ENCODE measurements at regions of chr2 and their contacts with region 1.

Region 1: DNA sequence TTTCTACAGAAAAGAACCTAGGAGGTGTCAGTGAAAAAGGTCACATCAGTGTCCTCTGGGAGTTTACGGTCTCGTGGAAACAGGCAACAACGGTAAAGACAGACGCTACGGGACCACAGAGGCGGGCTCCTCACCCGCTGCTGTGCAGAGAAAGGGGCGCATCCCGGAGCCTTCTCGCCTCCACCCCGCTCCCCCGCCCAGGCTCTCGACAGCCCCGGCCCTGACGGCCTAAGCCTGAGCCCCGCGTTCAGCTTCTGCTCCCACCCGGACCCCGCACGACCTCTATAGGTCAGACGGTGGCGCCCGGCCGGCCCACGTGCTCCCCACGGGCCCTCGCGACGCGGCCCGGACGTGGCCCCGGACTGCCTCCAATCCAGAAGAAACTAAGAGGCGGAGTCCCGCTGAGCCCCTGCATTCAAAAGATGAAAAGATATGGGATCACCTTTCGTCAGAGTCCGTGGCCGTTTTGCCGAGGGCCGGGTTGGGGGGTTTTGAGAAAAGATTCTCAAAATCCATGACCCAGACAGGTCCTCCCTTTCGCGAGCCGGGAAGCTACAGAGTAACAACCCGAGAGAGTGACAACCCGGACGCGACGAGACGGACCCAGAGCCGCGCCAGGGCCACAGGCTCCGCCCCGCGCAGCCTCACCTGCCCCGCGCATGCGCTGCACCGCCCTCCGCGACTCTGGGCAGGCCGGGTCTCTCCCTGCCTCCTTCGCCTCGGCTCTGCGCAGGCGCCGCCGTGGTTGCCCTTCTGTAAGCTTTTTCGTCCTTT is at the start of gene ZC3H8:
- DNase-seq: peak; percentile 92 to 95 (median 92)
- H3K4me3 ChIP-seq: peak within 1 kb of the TSS; percentile 87
- H3K27ac ChIP-seq: peak within 1 kb of the TSS; percentile 18 to 54
- H3K4me1 ChIP-seq: peaks cover 1% of the 10 kb centered on the region
- H3K27me3 ChIP-seq: no peaks in the 10 kb centered on the region
- CTCF ChIP-seq: no peak
- EP300 ChIP-seq: no peak
- POLR2A ChIP-seq: peak; percentile 53
- total RNA-seq, gene ZC3H8: 4.9 to 36.2 (median 10.9) TPM

Region 2: GRCh38 chr2:111994042-111994441 is 260.6 kb before region 1 on chr2:
- intact Hi-C with region 1: no loop called
- DNase-seq: no peak
- H3K4me3 ChIP-seq: no peak overlapping the region
- H3K27ac ChIP-seq: no peak overlapping the region
- H3K4me1 ChIP-seq: no peaks in the 10 kb centered on the region
- H3K27me3 ChIP-seq: peaks cover 3% of the 10 kb centered on the region
- CTCF ChIP-seq: no peak
- EP300 ChIP-seq: no peak
- POLR2A ChIP-seq: no peak

Region 3: GRCh38 chr2:112054847-112055729 is 199.6 kb before region 1 on chr2 and contains the start of gene TMEM87B:
- intact Hi-C with region 1: loop called in 1 of 4 experiments (anchors 10 kb)
- DNase-seq: peak; percentile 98 to 100 (median 99)
- H3K4me3 ChIP-seq: peak within 1 kb of the TSS; percentile 86
- H3K27ac ChIP-seq: peak within 1 kb of the TSS; percentile 70 to 94
- H3K4me1 ChIP-seq: peaks cover 8% of the 10 kb centered on the region
- H3K27me3 ChIP-seq: no peaks in the 10 kb centered on the region
- CTCF ChIP-seq: no peak
- EP300 ChIP-seq: no peak
- POLR2A ChIP-seq: peak; percentile 49
- total RNA-seq, gene TMEM87B: 11.0 to 23.8 (median 13.2) TPM

Region 4: DNA sequence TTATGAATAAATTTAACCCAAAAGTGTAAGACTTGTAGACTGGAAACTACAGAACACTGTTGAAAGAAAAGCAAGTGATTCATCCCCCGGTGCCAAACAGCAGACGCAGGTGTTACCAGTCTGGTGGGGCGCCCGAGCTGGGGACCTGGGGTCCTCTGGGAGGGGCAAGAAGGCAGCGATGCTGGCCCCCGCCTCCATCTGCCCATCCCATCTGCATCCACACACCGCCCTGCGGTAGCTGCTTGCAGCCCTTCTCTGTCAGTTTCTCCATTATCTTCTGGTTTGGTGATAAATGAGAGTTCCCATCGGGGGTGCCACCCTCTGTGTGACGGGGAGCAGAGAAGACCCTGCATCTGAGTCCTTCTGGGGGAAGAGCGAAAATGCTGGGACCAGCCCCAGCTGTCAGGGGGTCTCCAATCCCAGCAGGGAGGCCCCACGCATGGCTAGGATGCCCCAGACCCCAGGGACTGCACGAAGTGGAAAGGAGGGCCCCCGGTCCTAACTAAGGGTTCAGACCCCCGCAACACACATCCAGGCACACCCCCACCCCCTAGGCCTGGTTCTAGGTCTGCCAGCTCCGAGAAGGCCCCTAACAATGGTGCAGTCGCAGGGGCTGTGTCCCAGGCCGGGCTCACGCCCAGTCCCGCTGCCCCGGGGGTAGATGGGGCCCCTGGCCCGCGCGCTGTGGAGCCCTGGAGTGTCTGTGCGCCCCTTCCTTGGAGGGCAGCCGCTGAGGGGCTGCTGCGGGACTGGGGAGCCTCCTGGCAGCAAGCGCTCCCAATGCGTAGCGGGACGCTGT is 179.5 kb after region 1 on chr2:
- intact Hi-C with region 1: loop called in 2 of 4 experiments (anchors 5 to 10 kb)
- DNase-seq: peak in 3 of 5 donors; percentile 32 to 40 (median 37)
- H3K4me3 ChIP-seq: no peak overlapping the region
- H3K27ac ChIP-seq: no peak overlapping the region
- H3K4me1 ChIP-seq: no peaks in the 10 kb centered on the region
- H3K27me3 ChIP-seq: no peaks in the 10 kb centered on the region
- CTCF ChIP-seq: no peak
- EP300 ChIP-seq: no peak
- POLR2A ChIP-seq: no peak